ENCODE measurements at regions of chr10 and their contacts with region 1.

Region 1: GRCh38 chr10:96043033-96043932 is at the start of gene CCNJ:
- DNase-seq: peak; percentile 79
- H3K4me3 Mint-ChIP-seq: peak within 1 kb of the TSS; percentile 92
- H3K27ac Mint-ChIP-seq: peak within 1 kb of the TSS; percentile 83
- H3K4me1 Mint-ChIP-seq: peaks cover 42% of the 10 kb centered on the region
- H3K27me3 Mint-ChIP-seq: peaks cover 2% of the 10 kb centered on the region
- total RNA-seq, gene CCNJ: 9.7 and 10.2 TPM in 2 replicates

Region 2: GRCh38 chr10:95561182-95562075 is 481.9 kb before region 1 on chr10 and contains the start of gene SORBS1:
- intact Hi-C with region 1: loop called (anchors 10 kb)
- DNase-seq: peak; percentile 90
- H3K4me3 Mint-ChIP-seq: peak within 1 kb of the TSS; percentile 94
- H3K27ac Mint-ChIP-seq: peak within 1 kb of the TSS; percentile 77
- H3K4me1 Mint-ChIP-seq: peaks cover 15% of the 10 kb centered on the region
- H3K27me3 Mint-ChIP-seq: peaks cover 39% of the 10 kb centered on the region
- total RNA-seq, gene SORBS1: 0.59 and 0.73 TPM in 2 replicates

Region 3: GRCh38 chr10:96061232-96061631 is 17.9 kb after region 1 on chr10:
- intact Hi-C with region 1: loop called (anchors 1 kb)
- DNase-seq: no peak
- H3K4me3 Mint-ChIP-seq: no peak overlapping the region
- H3K27ac Mint-ChIP-seq: no peak overlapping the region
- H3K4me1 Mint-ChIP-seq: peaks cover 37% of the 10 kb centered on the region
- H3K27me3 Mint-ChIP-seq: no peaks in the 10 kb centered on the region

Region 4: GRCh38 chr10:96089670-96090462 is 46.6 kb after region 1 on chr10:
- intact Hi-C with region 1: loop called (anchors 1 kb)
- DNase-seq: peak; percentile 87
- H3K4me3 Mint-ChIP-seq: peak overlapping the region; percentile 90
- H3K27ac Mint-ChIP-seq: peak overlapping the region; percentile 93
- H3K4me1 Mint-ChIP-seq: peaks cover 14% of the 10 kb centered on the region
- H3K27me3 Mint-ChIP-seq: peaks cover 18% of the 10 kb centered on the region

Region 5: GRCh38 chr10:96292971-96293920 is 250.0 kb after region 1 on chr10:
- intact Hi-C with region 1: loop called (anchors 10 kb)
- DNase-seq: no peak
- H3K4me3 Mint-ChIP-seq: no peak overlapping the region
- H3K27ac Mint-ChIP-seq: no peak overlapping the region
- H3K4me1 Mint-ChIP-seq: peaks cover 14% of the 10 kb centered on the region
- H3K27me3 Mint-ChIP-seq: peaks cover 5% of the 10 kb centered on the region